ENCODE measurements at regions of chr3 and their contacts with region 1.

Region 1: GRCh38 chr3:115783938-115784738 is 160.8 kb downstream of the GAP43 start:
- DNase-seq: peak; percentile 94 to 95
- ATAC-seq: peak; percentile 97
- H3K4me3 ChIP-seq: peak overlapping the region; percentile 58 to 85
- H3K27ac ChIP-seq: peak overlapping the region; percentile 49 to 68
- H3K4me1 ChIP-seq: no peaks in the 10 kb centered on the region
- H3K27me3 ChIP-seq: no peaks in the 10 kb centered on the region

Region 2: DNA sequence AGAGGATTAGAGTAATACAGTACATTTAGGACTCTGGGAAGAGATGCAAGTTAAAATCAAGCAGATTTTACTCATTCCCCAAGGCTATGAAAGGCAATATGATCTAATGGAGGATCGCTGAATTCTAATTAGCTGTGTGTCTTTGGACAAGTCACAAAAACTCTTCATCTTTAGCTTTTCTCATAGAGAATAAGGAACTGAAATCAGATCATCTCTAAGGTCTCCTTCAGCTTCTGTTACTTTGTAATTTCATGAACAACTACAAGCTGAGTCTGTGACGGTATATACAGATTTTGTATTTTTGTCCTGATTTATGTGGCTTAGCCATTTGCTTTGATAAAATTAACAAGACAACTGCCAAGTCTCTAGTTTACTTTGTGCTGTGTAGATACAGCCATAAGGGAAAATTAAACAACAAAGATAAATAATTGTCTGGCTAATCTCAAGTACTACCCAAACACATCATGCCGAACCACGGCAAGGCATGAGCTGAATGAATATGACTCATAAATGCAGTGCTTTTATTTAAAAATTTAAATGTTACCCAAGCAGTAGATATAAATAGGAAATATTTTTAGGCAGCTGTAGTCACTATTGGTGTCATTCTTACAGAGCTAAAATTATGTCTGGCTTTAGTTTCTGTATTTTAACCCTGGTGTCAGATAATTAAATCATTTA is 79.3 kb before region 1 on chr3:
- intact Hi-C with region 1: loop called in 1 of 2 experiments (anchors 5 kb)
- DNase-seq: no peak
- ATAC-seq: no peak
- H3K4me3 ChIP-seq: no peak overlapping the region
- H3K27ac ChIP-seq: no peak overlapping the region
- H3K4me1 ChIP-seq: peaks cover 0 to 16% of the 10 kb centered on the region in 2 donors
- H3K27me3 ChIP-seq: no peaks in the 10 kb centered on the region

Region 3: GRCh38 chr3:115814778-115815380 is 30.7 kb after region 1 on chr3:
- intact Hi-C with region 1: loop called in 1 of 2 experiments (anchors 2 kb)
- DNase-seq: peak; percentile 71 to 89
- ATAC-seq: peak; percentile 83
- H3K4me3 ChIP-seq: no peak overlapping the region
- H3K27ac ChIP-seq: no peak overlapping the region
- H3K4me1 ChIP-seq: no peaks in the 10 kb centered on the region
- H3K27me3 ChIP-seq: no peaks in the 10 kb centered on the region

Region 4: GRCh38 chr3:115876876-115877614 is 92.9 kb after region 1 on chr3:
- intact Hi-C with region 1: no loop called
- DNase-seq: no peak
- ATAC-seq: no peak
- H3K4me3 ChIP-seq: no peak overlapping the region
- H3K27ac ChIP-seq: no peak overlapping the region
- H3K4me1 ChIP-seq: peaks cover 0 to 2% of the 10 kb centered on the region in 2 donors
- H3K27me3 ChIP-seq: no peaks in the 10 kb centered on the region

Region 5: GRCh38 chr3:116238846-116239565 is 454.9 kb after region 1 on chr3:
- intact Hi-C with region 1: no loop called
- DNase-seq: no peak
- ATAC-seq: no peak
- H3K4me3 ChIP-seq: no peak overlapping the region
- H3K27ac ChIP-seq: no peak overlapping the region
- H3K4me1 ChIP-seq: no peaks in the 10 kb centered on the region
- H3K27me3 ChIP-seq: no peaks in the 10 kb centered on the region